ENCODE measurements at regions of chr12 and their contacts with region 1.

Region 1: GRCh38 chr12:53219968-53220800 is 11.8 kb downstream of the RARG start:
- DNase-seq: peak; percentile 68 to 92 (median 88)
- ATAC-seq: peak; percentile 17 to 22
- H3K4me3 ChIP-seq: peak overlapping the region; percentile 93
- H3K27ac ChIP-seq: peak overlapping the region; percentile 63
- H3K4me1 ChIP-seq: peaks cover 13% of the 10 kb centered on the region
- H3K27me3 ChIP-seq: no peaks in the 10 kb centered on the region

Region 2: GRCh38 chr12:52821826-52822660 is 398.1 kb before region 1 on chr12:
- intact Hi-C with region 1: no loop called
- DNase-seq: no peak
- ATAC-seq: no peak
- H3K4me3 ChIP-seq: no peak overlapping the region
- H3K27ac ChIP-seq: no peak overlapping the region
- H3K4me1 ChIP-seq: no peaks in the 10 kb centered on the region
- H3K27me3 ChIP-seq: no peaks in the 10 kb centered on the region

Region 3: GRCh38 chr12:53251477-53252348 is 31.5 kb after region 1 on chr12:
- intact Hi-C with region 1: loop called in 1 of 4 experiments (anchors 5 kb)
- DNase-seq: peak; percentile 86 to 93 (median 93)
- ATAC-seq: peak; percentile 95 to 96
- H3K4me3 ChIP-seq: peak overlapping the region; percentile 63
- H3K27ac ChIP-seq: peak overlapping the region; percentile 96
- H3K4me1 ChIP-seq: peaks cover 2% of the 10 kb centered on the region
- H3K27me3 ChIP-seq: no peaks in the 10 kb centered on the region